ENCODE measurements at regions of chr19 and their contacts with region 1.

Region 1: GRCh38 chr19:55526216-55527196 is 10.4 kb downstream of the SBK2 start:
- DNase-seq: peak; percentile 63 to 89 (median 80)
- ATAC-seq: peak; percentile 72 to 88 (median 82)
- H3K4me3 ChIP-seq: peak overlapping the region in 1 of 12 donors; percentile 10
- H3K27ac ChIP-seq: peak overlapping the region in 10 of 12 donors; percentile 6 to 70 (median 42)
- H3K4me1 ChIP-seq: peaks cover 0 to 19% (median 10%) of the 10 kb centered on the region in 12 donors
- H3K27me3 ChIP-seq: peaks cover 0 to 6% (median 0%) of the 10 kb centered on the region in 9 donors
- CTCF ChIP-seq: no peak
- POLR2A ChIP-seq: no peak

Region 2: DNA sequence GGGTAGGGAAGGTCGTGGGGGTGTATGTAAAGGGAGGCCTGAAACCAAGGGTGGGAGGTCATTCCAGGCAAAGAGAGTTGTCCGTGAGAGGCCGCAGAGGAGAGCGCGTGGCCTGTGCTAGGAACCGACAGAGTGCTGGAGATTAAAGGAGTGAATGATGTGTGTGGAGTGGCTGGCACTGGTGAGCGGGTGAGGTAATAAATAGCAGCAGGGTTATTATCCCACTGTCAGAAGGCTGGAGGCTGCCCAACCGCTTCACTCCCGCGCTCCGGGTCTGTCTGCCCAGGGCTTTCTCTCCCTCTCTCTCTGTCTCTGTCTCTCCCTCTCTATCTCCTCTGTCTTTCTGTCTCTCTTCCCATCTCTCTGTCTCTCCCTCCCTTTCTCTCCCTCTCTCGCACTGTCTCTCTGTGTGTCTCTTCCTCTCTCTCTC is 36.8 kb after region 1 on chr19:
- intact Hi-C with region 1: loop called in 1 of 10 experiments (anchors 5 kb)
- DNase-seq: peak; percentile 70 to 90 (median 79)
- ATAC-seq: peak; percentile 91 to 95 (median 94)
- H3K4me3 ChIP-seq: peak overlapping the region in 3 of 12 donors; percentile 36 to 48 (median 37)
- H3K27ac ChIP-seq: peak overlapping the region in 11 of 12 donors; percentile 62 to 93 (median 84)
- H3K4me1 ChIP-seq: peaks cover 0 to 16% (median 0%) of the 10 kb centered on the region in 12 donors
- H3K27me3 ChIP-seq: no peaks in the 10 kb centered on the region
- CTCF ChIP-seq: no peak
- POLR2A ChIP-seq: peak in 1 of 2 donors; percentile 87

Region 3: DNA sequence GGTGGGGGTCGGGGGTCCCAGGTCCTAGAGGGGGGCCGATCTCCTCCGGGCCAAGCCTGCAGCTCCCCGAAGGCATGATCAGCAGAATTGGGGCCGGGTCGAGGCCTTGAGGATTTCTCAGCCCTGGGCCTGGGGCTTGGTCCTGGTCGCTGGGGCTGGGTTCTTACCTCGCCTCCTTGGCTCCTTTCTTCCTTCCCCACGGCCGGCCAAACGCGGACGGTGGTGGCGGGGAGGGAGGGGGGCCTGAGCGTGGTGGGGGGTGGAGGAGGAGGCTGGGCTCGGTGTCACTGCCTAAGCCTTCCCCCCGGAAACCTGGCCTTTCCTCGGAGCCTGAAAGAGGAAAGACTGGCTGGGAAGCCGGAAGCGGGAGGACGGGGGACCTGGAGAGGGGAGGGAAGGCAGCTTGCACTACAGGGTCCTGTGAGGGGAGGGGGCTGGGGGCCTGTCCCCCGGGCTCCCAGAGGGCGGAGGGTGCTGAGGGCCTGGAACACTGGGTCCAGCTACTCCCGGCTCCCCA is 54.2 kb after region 1 on chr19 and contains the start of gene ZNF579:
- intact Hi-C with region 1: loop called in 1 of 10 experiments (anchors 5 kb)
- DNase-seq: peak; percentile 89 to 91 (median 90)
- ATAC-seq: peak; percentile 78 to 92 (median 86)
- H3K4me3 ChIP-seq: peak within 1 kb of the TSS; percentile 74 to 97 (median 90)
- H3K27ac ChIP-seq: peak within 1 kb of the TSS; percentile 89 to 99 (median 94)
- H3K4me1 ChIP-seq: peaks cover 0 to 25% (median 12%) of the 10 kb centered on the region in 12 donors
- H3K27me3 ChIP-seq: peaks cover 0 to 3% (median 0%) of the 10 kb centered on the region in 9 donors
- CTCF ChIP-seq: no peak
- POLR2A ChIP-seq: no peak
- total RNA-seq, gene ZNF579: 5.4 to 13.9 (median 9.8) TPM